CD14-positive monocyte (primary cell): ENCODE measurements at regions of chr15 and their contacts with region 1.

Region 1: GRCh38 chr15:39336926-39337325 is 244.0 kb upstream of the THBS1 start:
- DNase-seq: no peak
- H3K4me3 ChIP-seq: no peak overlapping the region
- H3K4me3 Mint-ChIP-seq: no peak overlapping the region
- H3K27ac ChIP-seq: peak overlapping the region in 1 of 2 donors; percentile 90
- H3K27ac Mint-ChIP-seq: peak overlapping the region in 5 of 7 donors; percentile 23 to 96 (median 94)
- H3K4me1 ChIP-seq: peaks cover 32 to 41% of the 10 kb centered on the region in 2 donors
- H3K4me1 Mint-ChIP-seq: peaks cover 52% of the 10 kb centered on the region
- H3K27me3 ChIP-seq: no peaks in the 10 kb centered on the region
- H3K27me3 Mint-ChIP-seq: peaks cover 0 to 2% (median 0%) of the 10 kb centered on the region in 3 donors
- CTCF ChIP-seq: no peak

Region 2: DNA sequence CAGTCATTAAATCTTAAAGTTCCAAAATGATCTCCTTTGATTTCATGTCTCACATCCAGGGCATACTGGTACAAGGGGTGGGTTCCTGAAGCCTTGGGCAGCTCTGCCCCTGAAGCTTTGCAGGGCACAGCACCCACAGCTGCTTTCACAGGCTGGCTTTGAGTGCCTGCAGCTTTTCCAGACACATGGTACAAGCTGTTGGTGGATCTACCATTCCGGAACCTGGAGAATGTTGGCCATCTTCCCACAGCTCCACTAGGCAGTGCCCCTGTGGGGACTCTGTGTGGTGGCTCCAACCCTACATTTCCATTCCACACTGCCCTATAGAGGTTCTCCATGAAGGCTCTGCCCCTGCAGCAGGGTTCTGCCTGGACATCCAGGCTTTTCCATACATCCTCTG is 32.8 kb after region 1 on chr15:
- intact Hi-C with region 1: loop called in 1 of 2 experiments (anchors 5 kb)
- DNase-seq: no peak
- H3K4me3 ChIP-seq: no peak overlapping the region
- H3K4me3 Mint-ChIP-seq: no peak overlapping the region
- H3K27ac ChIP-seq: no peak overlapping the region
- H3K27ac Mint-ChIP-seq: no peak overlapping the region
- H3K4me1 ChIP-seq: peaks cover 4 to 9% of the 10 kb centered on the region in 2 donors
- H3K4me1 Mint-ChIP-seq: peaks cover 5% of the 10 kb centered on the region
- H3K27me3 ChIP-seq: no peaks in the 10 kb centered on the region
- H3K27me3 Mint-ChIP-seq: peaks cover 0 to 4% (median 0%) of the 10 kb centered on the region in 3 donors
- CTCF ChIP-seq: no peak

Region 3: GRCh38 chr15:39403674-39404117 is 66.8 kb after region 1 on chr15:
- intact Hi-C with region 1: no loop called
- DNase-seq: no peak
- H3K4me3 ChIP-seq: no peak overlapping the region
- H3K4me3 Mint-ChIP-seq: no peak overlapping the region
- H3K27ac ChIP-seq: no peak overlapping the region
- H3K27ac Mint-ChIP-seq: no peak overlapping the region
- H3K4me1 ChIP-seq: peaks cover 4 to 12% of the 10 kb centered on the region in 2 donors
- H3K4me1 Mint-ChIP-seq: peaks cover 36% of the 10 kb centered on the region
- H3K27me3 ChIP-seq: no peaks in the 10 kb centered on the region
- H3K27me3 Mint-ChIP-seq: peaks cover 0 to 1% (median 0%) of the 10 kb centered on the region in 3 donors
- CTCF ChIP-seq: no peak